Psoas muscle (tissue), 8 donors: ENCODE measurements at regions of chr1 and their contacts with region 1.

Region 1: DNA sequence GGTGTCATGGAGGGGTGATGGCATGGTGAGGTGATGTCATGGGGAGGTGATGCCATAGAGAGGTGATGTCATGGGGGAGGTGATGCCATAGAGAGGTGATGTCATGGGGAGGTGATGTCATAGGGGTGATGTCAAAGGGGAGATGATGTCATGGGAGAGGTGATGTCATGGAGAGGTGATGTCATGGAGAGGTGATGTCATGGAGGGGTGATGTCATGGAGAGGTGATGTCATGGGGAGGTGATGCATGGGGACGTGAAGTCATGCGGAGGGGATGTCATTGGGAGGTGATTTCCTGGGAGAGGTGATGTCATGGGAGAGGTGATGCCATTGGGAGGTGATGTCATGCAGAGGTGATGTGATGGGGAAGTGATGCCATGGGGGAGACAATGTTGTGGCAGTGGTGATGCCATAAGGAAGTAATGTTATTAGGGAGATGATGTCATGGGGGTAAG is 92.1 kb upstream of the C1orf174 start:
- DNase-seq: no peak
- ATAC-seq: no peak
- H3K4me3 ChIP-seq: no peak overlapping the region
- H3K27ac ChIP-seq: no peak overlapping the region
- H3K4me1 ChIP-seq: no peaks in the 10 kb centered on the region
- H3K27me3 ChIP-seq: peaks cover 0 to 12% (median 0%) of the 10 kb centered on the region in 3 donors
- CTCF ChIP-seq: no peak

Region 2: GRCh38 chr1:4006676-4007374 is 14.7 kb after region 1 on chr1:
- intact Hi-C with region 1: loop called in 1 of 2 experiments (anchors 1 kb)
- DNase-seq: no peak
- ATAC-seq: no peak
- H3K4me3 ChIP-seq: no peak overlapping the region
- H3K27ac ChIP-seq: no peak overlapping the region
- H3K4me1 ChIP-seq: no peaks in the 10 kb centered on the region
- H3K27me3 ChIP-seq: peaks cover 3 to 23% (median 4%) of the 10 kb centered on the region in 3 donors
- CTCF ChIP-seq: no peak

Region 3: DNA sequence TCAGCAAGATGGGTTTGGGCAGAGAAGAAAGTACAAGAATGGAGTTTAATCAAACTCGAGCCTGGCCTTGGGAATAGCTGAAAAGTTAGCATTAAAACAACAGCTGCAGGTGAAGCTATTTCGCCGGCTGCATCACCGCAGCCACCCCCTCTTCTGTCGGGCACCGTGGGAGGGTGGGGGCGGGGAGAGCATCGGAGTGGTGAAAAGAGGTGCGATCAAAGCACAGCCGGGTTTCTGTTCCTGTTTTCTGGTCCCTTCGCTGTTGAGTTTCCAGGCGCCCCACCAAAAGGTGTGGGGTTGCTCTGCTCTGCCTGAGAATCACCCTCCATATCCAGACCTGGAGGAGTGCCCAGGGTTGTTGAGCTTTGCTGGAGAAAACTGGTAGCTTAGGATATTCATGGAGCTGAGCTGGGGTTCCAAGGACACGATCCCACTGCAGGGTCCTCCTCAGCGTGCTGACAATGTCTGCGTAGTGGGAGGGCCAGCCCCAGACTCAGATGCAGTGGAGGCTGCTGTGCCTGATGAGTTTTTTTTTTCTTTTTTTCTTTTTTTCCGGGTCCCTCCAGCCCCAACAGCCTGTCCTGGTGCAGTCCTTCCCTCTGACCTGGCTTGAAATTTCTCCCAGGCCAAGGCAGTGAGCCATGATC is 35.5 kb after region 1 on chr1:
- intact Hi-C with region 1: no loop called
- DNase-seq: no peak
- ATAC-seq: no peak
- H3K4me3 ChIP-seq: no peak overlapping the region
- H3K27ac ChIP-seq: no peak overlapping the region
- H3K4me1 ChIP-seq: no peaks in the 10 kb centered on the region
- H3K27me3 ChIP-seq: peaks cover 0 to 20% (median 8%) of the 10 kb centered on the region in 3 donors
- CTCF ChIP-seq: no peak